ENCODE measurements at regions of chr3 and their contacts with region 1.

Region 1: GRCh38 chr3:193788189-193788991 is 195.4 kb downstream of the OPA1 start:
- DNase-seq: peak; percentile 49
- H3K4me3 ChIP-seq: no peak overlapping the region
- H3K27ac ChIP-seq: no peak overlapping the region
- H3K4me1 ChIP-seq: peaks cover 4% of the 10 kb centered on the region
- H3K27me3 ChIP-seq: no peaks in the 10 kb centered on the region
- CTCF ChIP-seq: peak; percentile 13 to 66 (median 62)
- POLR2A ChIP-seq: no peak

Region 2: GRCh38 chr3:193637831-193638230 is 150.6 kb before region 1 on chr3:
- intact Hi-C with region 1: no loop called
- DNase-seq: no peak
- H3K4me3 ChIP-seq: no peak overlapping the region
- H3K27ac ChIP-seq: no peak overlapping the region
- H3K4me1 ChIP-seq: no peaks in the 10 kb centered on the region
- H3K27me3 ChIP-seq: no peaks in the 10 kb centered on the region
- CTCF ChIP-seq: no peak
- POLR2A ChIP-seq: no peak

Region 3: DNA sequence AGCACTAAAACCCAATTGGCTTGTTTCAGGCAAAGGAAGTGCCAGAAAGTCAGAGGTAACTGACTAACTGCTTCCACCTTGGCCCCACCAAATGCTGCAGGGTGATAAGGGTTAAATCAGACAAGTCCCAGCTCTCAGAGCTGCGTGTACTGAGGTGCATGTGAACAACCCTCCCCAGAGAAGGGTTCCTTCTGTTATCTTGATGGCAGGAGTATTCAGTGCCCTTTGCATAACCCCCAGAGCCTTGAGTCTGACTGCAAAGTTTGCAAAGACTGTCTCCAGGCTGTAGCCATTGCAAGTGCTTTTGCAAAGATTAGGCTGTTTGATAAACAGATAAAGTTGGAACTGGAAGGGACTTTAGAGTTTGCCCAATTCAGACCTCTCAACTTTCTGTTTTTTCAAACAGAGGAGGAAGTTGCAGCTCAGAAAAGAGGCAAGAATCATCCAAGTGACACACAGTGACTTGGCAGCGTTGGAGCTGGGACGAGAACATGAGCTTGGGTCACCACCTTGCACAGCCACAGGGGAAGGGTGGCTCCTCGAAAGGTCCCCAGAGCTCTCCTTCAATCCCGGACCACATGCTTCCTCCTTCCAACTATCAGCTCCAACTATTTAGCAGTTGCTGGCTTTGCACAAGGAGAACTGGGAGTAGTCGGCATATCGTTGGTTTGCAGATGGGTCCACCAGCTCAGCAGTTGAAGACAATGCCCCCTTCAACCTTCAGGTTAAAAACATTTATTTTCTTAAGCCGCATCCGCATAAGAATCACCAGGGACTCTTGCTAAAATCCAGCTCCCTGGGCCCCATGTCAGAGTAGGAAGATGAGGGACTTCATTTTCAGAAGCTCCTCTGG is 122.7 kb after region 1 on chr3:
- intact Hi-C with region 1: loop called (anchors 5 kb)
- DNase-seq: no peak
- H3K4me3 ChIP-seq: no peak overlapping the region
- H3K27ac ChIP-seq: no peak overlapping the region
- H3K4me1 ChIP-seq: no peaks in the 10 kb centered on the region
- H3K27me3 ChIP-seq: no peaks in the 10 kb centered on the region
- CTCF ChIP-seq: no peak
- POLR2A ChIP-seq: no peak

Region 4: DNA sequence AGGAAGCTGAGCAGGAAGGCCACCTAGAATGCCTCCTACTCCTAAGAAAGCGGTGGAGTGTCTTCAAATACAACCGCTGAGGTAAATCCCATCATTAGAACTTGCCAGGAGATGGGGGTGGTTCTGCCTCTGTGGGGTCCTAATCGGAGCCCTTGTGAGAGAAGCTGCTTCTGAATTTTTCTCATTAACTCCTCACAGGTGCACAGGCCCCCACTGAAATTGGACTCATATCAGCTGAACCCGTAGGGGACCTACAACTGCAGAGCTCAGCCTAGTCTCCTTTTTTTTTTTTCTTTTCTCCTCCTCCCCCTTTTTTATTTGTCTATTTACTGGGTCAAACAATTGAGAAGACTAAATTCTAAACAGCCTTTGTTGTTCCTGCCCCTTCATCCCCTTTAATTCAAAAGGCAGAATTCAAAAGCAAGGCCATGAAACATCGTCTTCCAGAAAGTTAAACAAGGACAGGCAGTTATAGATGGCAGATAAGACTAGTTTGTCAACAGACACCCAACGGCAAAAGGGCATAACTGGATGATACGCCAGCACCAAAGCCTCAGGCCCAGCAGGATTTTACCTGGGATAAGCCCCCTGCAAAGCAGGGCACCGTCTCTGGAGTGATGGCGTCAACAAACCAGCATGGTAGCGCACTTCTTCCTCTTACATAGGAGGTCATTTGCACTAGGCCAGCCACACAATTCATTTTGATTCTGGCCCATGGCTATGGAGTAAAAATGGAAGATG is 133.8 kb after region 1 on chr3:
- intact Hi-C with region 1: no loop called
- DNase-seq: peak; percentile 55
- H3K4me3 ChIP-seq: no peak overlapping the region
- H3K27ac ChIP-seq: peak overlapping the region; percentile 23 to 77
- H3K4me1 ChIP-seq: peaks cover 7% of the 10 kb centered on the region
- H3K27me3 ChIP-seq: no peaks in the 10 kb centered on the region
- CTCF ChIP-seq: no peak
- POLR2A ChIP-seq: no peak

Region 5: GRCh38 chr3:194003125-194004057 is 215.0 kb after region 1 on chr3:
- intact Hi-C with region 1: loop called (anchors 10 kb)
- DNase-seq: peak; percentile 83
- H3K4me3 ChIP-seq: peak overlapping the region; percentile 23 to 31
- H3K27ac ChIP-seq: peak overlapping the region; percentile 78
- H3K4me1 ChIP-seq: peaks cover 7% of the 10 kb centered on the region
- H3K27me3 ChIP-seq: no peaks in the 10 kb centered on the region
- CTCF ChIP-seq: peak in 1 of 4 experiments; percentile 5
- POLR2A ChIP-seq: peak; percentile 10